HepG2 (cell line): ENCODE measurements at regions of chr17 and their contacts with region 1.

Region 1: GRCh38 chr17:72725433-72726068 is 366.9 kb downstream of the SLC39A11 start:
- DNase-seq: peak; percentile 66
- ATAC-seq: peak; percentile 87
- H3K4me3 ChIP-seq: no peak overlapping the region
- H3K27ac ChIP-seq: no peak overlapping the region
- H3K4me1 ChIP-seq: peaks cover 14% of the 10 kb centered on the region
- H3K27me3 ChIP-seq: no peaks in the 10 kb centered on the region
- CTCF ChIP-seq: peak; percentile 98
- EP300 ChIP-seq: 0 out of 4 replicates have a peak, but pooled peaks of 1 of the 2 experiments have one; percentile 19
- POLR2A ChIP-seq: no peak
- RAD21 ChIP-seq: peak; percentile 98

Region 2: GRCh38 chr17:72976971-72977770 is 251.6 kb after region 1 on chr17:
- CTCF ChIA-PET with region 1: no interaction called
- POLR2A ChIA-PET with region 1: no interaction called
- in situ Hi-C with region 1: loop called (anchors 10 kb)
- intact Hi-C with region 1: no loop called
- DNase-seq: no peak
- ATAC-seq: peak; percentile 32
- H3K4me3 ChIP-seq: peak overlapping the region in 1 of 3 experiments; percentile 43; a peak in 2 of 6 replicates
- H3K27ac ChIP-seq: no peak overlapping the region
- H3K4me1 ChIP-seq: peaks cover 37% of the 10 kb centered on the region
- H3K27me3 ChIP-seq: peaks cover 2 to 3% of the 10 kb centered on the region in 2 experiments; a peak in 3 of 5 replicates
- CTCF ChIP-seq: no peak
- EP300 ChIP-seq: no peak
- POLR2A ChIP-seq: no peak
- RAD21 ChIP-seq: no peak

Region 3: GRCh38 chr17:73092523-73093135 is 367.1 kb after region 1 on chr17 and contains the start of gene SLC39A11:
- CTCF ChIA-PET with region 1: no interaction called
- POLR2A ChIA-PET with region 1: no interaction called
- in situ Hi-C with region 1: no loop called
- intact Hi-C with region 1: loop called (anchors 1 kb)
- DNase-seq: peak; percentile 92
- ATAC-seq: peak; percentile 87
- H3K4me3 ChIP-seq: peak within 1 kb of the TSS; percentile 76 to 80 (median 78)
- H3K27ac ChIP-seq: peak within 1 kb of the TSS; percentile 61
- H3K4me1 ChIP-seq: peaks cover 42% of the 10 kb centered on the region
- H3K27me3 ChIP-seq: peaks cover 0 to 24% of the 10 kb centered on the region in 2 experiments; a peak in 3 of 5 replicates
- CTCF ChIP-seq: 0 out of 2 replicates have a peak, but pooled peaks have one; percentile 10
- EP300 ChIP-seq: peak in 1 of 2 experiments; percentile 55; a peak in 2 of 4 replicates
- POLR2A ChIP-seq: peak; percentile 56 to 79
- RAD21 ChIP-seq: peak; percentile 30; the same call in 1 of the 2 replicates
- total RNA-seq, gene SLC39A11: 19.2 and 31.5 TPM in 2 replicates

Region 4: GRCh38 chr17:73231841-73232586 is 506.5 kb after region 1 on chr17:
- CTCF ChIA-PET with region 1: interaction called, 3 read pairs
- POLR2A ChIA-PET with region 1: no interaction called
- in situ Hi-C with region 1: no loop called
- intact Hi-C with region 1: loop called (anchors 1 kb)
- DNase-seq: peak; percentile 94
- ATAC-seq: peak; percentile 91
- H3K4me3 ChIP-seq: peak overlapping the region; percentile 97 to 98 (median 97)
- H3K27ac ChIP-seq: peak overlapping the region; percentile 77
- H3K4me1 ChIP-seq: peaks cover 61% of the 10 kb centered on the region
- H3K27me3 ChIP-seq: peaks cover 0 to 4% of the 10 kb centered on the region in 2 experiments; a peak in 1 of 5 replicates
- CTCF ChIP-seq: peak; percentile 78
- EP300 ChIP-seq: no peak; a peak in 1 of 4 replicates
- POLR2A ChIP-seq: peak; percentile 60 to 87
- RAD21 ChIP-seq: peak; percentile 51; the same call in 1 of the 2 replicates

Region 5: DNA sequence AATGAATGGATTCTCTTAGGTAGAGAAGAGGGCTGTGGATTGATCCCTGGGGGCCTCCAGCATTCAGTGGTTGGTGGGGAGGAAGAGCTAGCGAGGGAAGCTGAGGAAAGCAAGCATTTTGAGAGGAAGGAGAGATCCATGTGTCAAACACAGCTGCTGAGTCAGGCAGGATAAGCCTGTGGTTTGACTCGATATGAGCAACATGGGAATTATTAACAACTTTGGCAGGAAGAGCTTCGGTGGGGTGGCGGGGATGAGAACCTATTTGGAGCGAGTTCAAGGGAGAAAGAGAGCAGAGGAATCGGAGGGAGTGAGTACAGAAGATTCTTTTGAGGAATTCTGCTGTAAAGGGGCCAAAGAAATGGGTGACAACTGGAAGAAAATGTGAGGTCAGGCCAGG is 645.7 kb after region 1 on chr17:
- CTCF ChIA-PET with region 1: no interaction called
- POLR2A ChIA-PET with region 1: no interaction called
- in situ Hi-C with region 1: loop called (anchors 5 kb)
- intact Hi-C with region 1: loop called (anchors 1 kb)
- DNase-seq: no peak
- ATAC-seq: no peak
- H3K4me3 ChIP-seq: no peak overlapping the region
- H3K27ac ChIP-seq: no peak overlapping the region
- H3K4me1 ChIP-seq: peaks cover 14% of the 10 kb centered on the region
- H3K27me3 ChIP-seq: peaks cover 7 to 73% of the 10 kb centered on the region in 2 experiments; a peak in 4 of 5 replicates
- CTCF ChIP-seq: no peak
- EP300 ChIP-seq: no peak
- POLR2A ChIP-seq: no peak
- RAD21 ChIP-seq: no peak